ENCODE measurements at regions of chr6 and their contacts with region 1.

Region 1: DNA sequence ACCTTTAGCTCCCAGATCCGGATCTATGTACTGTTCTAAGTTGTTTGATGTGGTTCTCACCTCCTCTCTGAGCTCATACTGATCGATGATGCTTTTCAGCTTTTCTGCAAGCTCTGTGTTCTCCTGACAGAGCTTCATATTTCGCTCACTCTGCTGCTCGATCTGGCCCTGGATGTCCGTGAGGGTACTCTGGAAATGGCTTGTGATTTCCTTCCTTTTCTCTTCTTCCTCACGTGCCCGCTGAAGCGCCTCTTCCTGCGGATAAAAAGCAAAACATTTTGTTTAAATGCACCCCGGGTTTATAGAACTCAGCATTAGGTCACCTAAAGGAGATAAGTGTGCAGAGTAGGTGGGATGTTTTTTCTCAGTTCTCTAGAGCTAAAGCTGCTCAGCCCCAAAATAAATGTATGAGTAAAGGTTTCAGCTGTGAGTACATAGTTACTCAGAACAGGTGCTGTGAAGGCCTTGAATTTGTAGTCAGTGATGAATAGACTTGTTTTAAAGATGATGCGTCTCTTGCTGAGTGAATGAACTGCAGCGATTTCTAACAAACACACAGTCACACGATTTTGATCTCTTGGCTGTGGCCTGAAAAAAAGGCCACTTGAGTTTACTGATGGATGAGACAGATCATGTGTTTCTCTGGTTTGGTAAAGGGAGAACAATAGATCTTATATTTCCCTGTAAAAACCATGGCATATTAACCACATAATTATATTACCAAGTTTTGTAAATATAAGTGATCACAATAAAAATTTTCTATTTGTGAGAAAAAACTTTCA is 29.1 kb downstream of the TXLNB start:
- DNase-seq: no peak
- H3K4me3 ChIP-seq: no peak overlapping the region
- H3K27me3 ChIP-seq: 0 out of 2 replicates have a peak, but pooled peaks cover 2% of the 10 kb centered on the region
- CTCF ChIP-seq: no peak

Region 2: DNA sequence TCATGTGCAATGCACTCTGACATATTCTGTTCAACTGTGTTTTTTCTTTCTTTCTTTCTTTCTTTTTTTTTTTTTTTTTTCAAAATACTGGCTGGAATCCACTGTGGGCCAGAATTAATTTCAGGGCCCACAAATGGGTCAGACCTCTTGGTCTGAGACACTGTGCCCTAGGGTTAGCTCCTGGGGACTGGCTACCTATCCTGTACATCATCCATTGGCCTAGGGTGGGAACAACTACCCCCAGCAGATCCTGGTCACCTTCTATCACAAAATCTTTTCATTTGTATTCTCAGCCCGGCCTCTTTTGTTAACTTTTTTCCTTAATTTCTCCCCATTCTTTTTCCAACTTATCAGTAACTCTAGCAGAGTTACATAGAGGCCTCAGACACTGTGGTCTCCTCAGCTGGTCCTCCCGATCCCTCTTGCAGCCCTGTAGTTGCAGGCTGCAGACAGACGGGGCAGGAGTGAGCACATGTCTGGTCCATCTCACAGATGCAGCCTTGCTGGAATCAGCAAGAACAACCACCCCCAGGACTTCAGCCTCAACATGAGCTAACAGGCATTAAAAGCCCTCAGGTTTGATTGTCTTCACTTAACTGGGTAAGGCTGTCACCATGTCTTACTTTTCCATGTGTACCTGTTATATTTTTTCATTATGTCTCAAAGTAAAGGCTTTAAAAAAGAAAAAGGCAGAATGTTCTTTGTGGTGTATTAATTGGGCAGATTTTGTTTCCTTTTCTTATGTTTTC is 12.2 kb before region 1 on chr6:
- CTCF ChIA-PET with region 1: interaction called, 14 read pairs
- POLR2A ChIA-PET with region 1: no interaction called
- DNase-seq: no peak
- H3K4me3 ChIP-seq: no peak overlapping the region
- H3K27me3 ChIP-seq: no peaks in the 10 kb centered on the region
- CTCF ChIP-seq: peak; percentile 71

Measured in BJ (cell line).